ENCODE measurements at regions of chr12 and their contacts with region 1.

Region 1: GRCh38 chr12:51269174-51270066 is 795 bp downstream of the SMAGP start:
- DNase-seq: peak; percentile 82 to 87 (median 84)
- ATAC-seq: peak; percentile 77
- H3K4me3 ChIP-seq: peak overlapping the region; percentile 43
- H3K4me1 ChIP-seq: peaks cover 23% of the 10 kb centered on the region
- CTCF ChIP-seq: no peak

Region 2: DNA sequence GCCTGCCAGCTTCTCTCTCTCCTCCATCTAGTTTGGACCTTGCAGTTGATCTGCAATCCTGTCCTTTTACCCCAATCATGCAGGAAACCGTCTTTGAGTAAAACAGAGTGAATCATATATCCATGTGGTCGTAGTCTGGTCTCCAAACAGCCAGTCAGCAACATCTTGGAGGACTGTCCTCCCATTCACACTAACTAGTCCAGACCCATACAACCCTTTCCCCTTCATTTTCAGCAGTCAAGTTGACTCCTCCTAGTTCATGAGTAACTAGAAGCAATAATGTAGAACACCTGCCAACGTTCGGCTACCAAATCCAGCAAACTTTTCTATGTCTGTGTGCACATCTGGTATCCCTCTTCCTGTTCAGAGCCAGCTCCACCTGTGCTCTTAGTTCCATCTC is 65.3 kb after region 1 on chr12:
- intact Hi-C with region 1: loop called in 1 of 2 experiments (anchors 2 kb)
- DNase-seq: peak in 1 of 3 donors; percentile 44
- ATAC-seq: peak; percentile 86
- H3K4me3 ChIP-seq: no peak overlapping the region
- H3K4me1 ChIP-seq: peaks cover 9% of the 10 kb centered on the region
- CTCF ChIP-seq: no peak